ENCODE measurements at regions of chr2 and their contacts with region 1.

Region 1: DNA sequence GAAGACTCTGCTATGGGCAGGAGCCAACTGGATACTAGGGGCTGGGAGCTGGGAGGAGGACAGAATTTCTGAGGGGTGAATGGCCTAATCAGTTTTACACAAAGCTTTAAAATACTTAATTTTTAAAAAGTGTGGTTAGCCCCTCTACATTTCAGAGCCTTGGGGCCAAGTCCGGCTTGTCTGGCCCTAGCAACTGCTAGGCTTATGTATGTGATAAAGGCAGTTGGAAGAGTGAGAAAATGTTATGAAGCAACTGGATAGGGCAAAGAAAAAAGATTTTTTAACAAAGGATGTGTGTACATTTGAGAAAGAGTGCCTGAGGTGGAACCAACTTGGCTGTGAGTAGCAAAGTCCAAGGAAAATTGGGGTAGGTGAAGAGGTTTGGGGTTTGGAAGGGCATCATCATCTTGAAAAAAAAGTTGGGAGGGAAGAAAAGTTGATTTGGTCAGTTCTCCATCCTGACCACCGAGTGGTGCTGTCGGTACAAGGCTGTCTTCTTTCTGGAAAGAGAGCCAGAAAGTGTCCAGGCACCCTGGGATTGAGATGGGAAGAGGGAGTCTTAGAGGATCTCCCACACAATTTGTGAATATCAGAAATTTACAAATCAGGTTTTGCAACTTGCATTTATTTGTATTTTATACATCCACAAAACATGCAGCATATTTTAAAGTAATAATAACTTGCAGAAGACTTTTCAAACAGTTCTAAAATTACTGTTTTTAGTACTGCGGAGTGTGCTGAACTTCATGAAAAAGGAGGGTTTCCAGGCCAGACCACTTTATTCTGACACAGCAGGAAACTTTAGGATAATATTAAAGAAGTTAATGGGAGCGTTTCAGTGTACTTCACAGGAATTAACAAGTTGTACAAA is 10.5 kb upstream of the CDK15 start:
- DNase-seq: peak; percentile 55
- H3K4me3 Mint-ChIP-seq: no peak overlapping the region
- H3K27ac Mint-ChIP-seq: no peak overlapping the region
- H3K4me1 Mint-ChIP-seq: peaks cover 23% of the 10 kb centered on the region
- H3K27me3 Mint-ChIP-seq: no peaks in the 10 kb centered on the region
- CTCF ChIP-seq: peak; percentile 70

Region 2: GRCh38 chr2:201257956-201258665 is 537.7 kb before region 1 on chr2:
- CTCF ChIA-PET with region 1: no interaction called
- intact Hi-C with region 1: no loop called
- DNase-seq: peak; percentile 91
- H3K4me3 Mint-ChIP-seq: peak overlapping the region; percentile 78
- H3K27ac Mint-ChIP-seq: peak overlapping the region; percentile 93
- H3K4me1 Mint-ChIP-seq: peaks cover 87% of the 10 kb centered on the region
- H3K27me3 Mint-ChIP-seq: no peaks in the 10 kb centered on the region
- CTCF ChIP-seq: no peak

Region 3: GRCh38 chr2:201831469-201831868 is 35.6 kb after region 1 on chr2:
- CTCF ChIA-PET with region 1: no interaction called
- intact Hi-C with region 1: loop called (anchors 5 kb)
- DNase-seq: no peak
- H3K4me3 Mint-ChIP-seq: no peak overlapping the region
- H3K27ac Mint-ChIP-seq: no peak overlapping the region
- H3K4me1 Mint-ChIP-seq: peaks cover 17% of the 10 kb centered on the region
- H3K27me3 Mint-ChIP-seq: peaks cover 9% of the 10 kb centered on the region
- CTCF ChIP-seq: no peak

Region 4: GRCh38 chr2:202034249-202035088 is 238.6 kb after region 1 on chr2:
- CTCF ChIA-PET with region 1: no interaction called
- intact Hi-C with region 1: loop called (anchors 5 kb)
- DNase-seq: peak; percentile 37
- H3K4me3 Mint-ChIP-seq: no peak overlapping the region
- H3K27ac Mint-ChIP-seq: peak overlapping the region; percentile 46
- H3K4me1 Mint-ChIP-seq: peaks cover 15% of the 10 kb centered on the region
- H3K27me3 Mint-ChIP-seq: no peaks in the 10 kb centered on the region
- CTCF ChIP-seq: no peak

Region 5: GRCh38 chr2:202158796-202159195 is 363.0 kb after region 1 on chr2:
- CTCF ChIA-PET with region 1: interaction called, 4 read pairs
- intact Hi-C with region 1: loop called (anchors 5 kb)
- DNase-seq: peak; percentile 30
- H3K4me3 Mint-ChIP-seq: no peak overlapping the region
- H3K27ac Mint-ChIP-seq: no peak overlapping the region
- H3K4me1 Mint-ChIP-seq: no peaks in the 10 kb centered on the region
- H3K27me3 Mint-ChIP-seq: no peaks in the 10 kb centered on the region
- CTCF ChIP-seq: no peak

Region 6: DNA sequence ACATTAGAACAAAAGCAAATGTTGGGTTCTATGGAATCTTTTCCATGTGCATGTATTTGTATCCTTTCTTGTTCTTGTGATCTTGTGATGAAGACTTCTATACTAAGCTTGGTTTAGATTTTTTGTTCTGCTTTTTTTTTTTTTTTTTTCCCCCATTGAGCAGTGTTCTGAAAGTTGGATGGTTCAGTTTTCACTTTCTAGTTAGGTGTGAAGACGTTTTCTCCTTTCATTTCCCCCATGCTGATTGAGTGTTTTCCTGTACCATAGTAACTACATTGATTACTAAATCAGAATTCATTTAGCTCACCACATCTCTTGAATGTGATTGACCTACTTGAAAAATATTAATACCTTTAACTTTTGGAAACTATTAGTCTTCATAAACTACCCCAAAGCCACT is 503.9 kb after region 1 on chr2:
- CTCF ChIA-PET with region 1: no interaction called
- intact Hi-C with region 1: loop called (anchors 10 kb)
- DNase-seq: no peak
- H3K4me3 Mint-ChIP-seq: no peak overlapping the region
- H3K27ac Mint-ChIP-seq: no peak overlapping the region
- H3K4me1 Mint-ChIP-seq: no peaks in the 10 kb centered on the region
- H3K27me3 Mint-ChIP-seq: no peaks in the 10 kb centered on the region
- CTCF ChIP-seq: no peak

Region 7: GRCh38 chr2:203238704-203239526 is 1443.1 kb after region 1 on chr2 and contains the start of gene CYP20A1:
- CTCF ChIA-PET with region 1: no interaction called
- intact Hi-C with region 1: no loop called
- DNase-seq: peak; percentile 98
- H3K4me3 Mint-ChIP-seq: peak within 1 kb of the TSS; percentile 88
- H3K27ac Mint-ChIP-seq: peak within 1 kb of the TSS; percentile 92
- H3K4me1 Mint-ChIP-seq: peaks cover 16% of the 10 kb centered on the region
- H3K27me3 Mint-ChIP-seq: no peaks in the 10 kb centered on the region
- CTCF ChIP-seq: peak; percentile 24
- total RNA-seq, gene CYP20A1: 14.2 and 15.1 TPM in 2 replicates